Mammary epithelial cell (primary cell): ENCODE measurements at regions of chr1 and their contacts with region 1.

Region 1: DNA sequence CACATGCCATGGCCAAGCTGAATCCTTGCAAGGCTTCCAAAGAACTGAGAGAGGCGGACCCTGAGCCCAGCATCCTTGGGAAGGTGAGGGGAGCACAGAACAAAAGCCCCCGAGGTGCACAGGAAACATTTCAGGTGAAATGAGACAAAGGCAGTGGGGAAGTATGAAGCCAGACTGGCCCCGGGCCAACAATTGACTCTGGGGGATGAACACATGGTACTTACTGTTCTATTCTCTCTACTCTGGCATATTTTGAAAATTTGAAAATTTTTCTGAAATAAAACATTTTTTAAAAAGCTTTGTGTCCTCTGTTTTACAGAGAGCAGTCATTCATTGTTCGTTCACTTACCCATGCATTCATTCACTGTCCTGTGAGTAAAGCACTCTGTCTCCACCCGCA is 77.7 kb downstream of the GRIK3 start:
- DNase-seq: no peak
- H3K4me3 ChIP-seq: no peak overlapping the region
- H3K27ac ChIP-seq: no peak overlapping the region
- H3K4me1 ChIP-seq: no peaks in the 10 kb centered on the region
- H3K27me3 ChIP-seq: no peaks in the 10 kb centered on the region
- CTCF ChIP-seq: no peak

Region 2: GRCh38 chr1:36846357-36846756 is 110.2 kb before region 1 on chr1:
- CTCF ChIA-PET with region 1: no interaction called
- dilution Hi-C with region 1: no loop called
- in situ Hi-C with region 1: no loop called
- intact Hi-C with region 1: no loop called
- DNase-seq: no peak
- H3K4me3 ChIP-seq: no peak overlapping the region
- H3K27ac ChIP-seq: no peak overlapping the region
- H3K4me1 ChIP-seq: no peaks in the 10 kb centered on the region
- H3K27me3 ChIP-seq: no peaks in the 10 kb centered on the region
- CTCF ChIP-seq: no peak

Region 3: DNA sequence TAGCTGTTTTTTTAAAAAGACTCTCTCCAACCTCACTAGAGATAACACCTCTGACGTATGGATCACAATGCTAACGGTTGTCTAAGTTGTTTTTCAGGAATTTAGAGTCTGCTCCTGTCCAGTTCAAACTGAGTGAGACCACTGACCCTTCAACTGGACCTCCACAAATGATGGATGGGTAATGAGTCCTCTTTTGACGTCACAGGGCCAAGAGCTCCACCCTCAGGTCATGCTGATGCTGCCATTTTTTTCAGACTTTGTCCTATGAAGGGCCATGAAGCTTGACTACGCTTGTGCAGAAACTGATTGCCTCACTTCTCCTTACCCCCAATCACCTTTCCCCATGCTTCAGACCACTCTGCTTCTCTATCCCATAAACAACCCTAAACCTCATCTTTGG is 61.1 kb after region 1 on chr1:
- CTCF ChIA-PET with region 1: no interaction called
- dilution Hi-C with region 1: loop called (anchors 5 kb)
- in situ Hi-C with region 1: no loop called
- intact Hi-C with region 1: no loop called
- DNase-seq: no peak
- H3K4me3 ChIP-seq: no peak overlapping the region
- H3K27ac ChIP-seq: no peak overlapping the region
- H3K4me1 ChIP-seq: no peaks in the 10 kb centered on the region
- H3K27me3 ChIP-seq: no peaks in the 10 kb centered on the region
- CTCF ChIP-seq: no peak